Upper lobe of right lung (tissue), 1 donor: ENCODE measurements at regions of chr6 and their contacts with region 1.

Region 1: GRCh38 chr6:152642989-152643388 is 5.8 kb upstream of the SYNE1 start:
- DNase-seq: peak; percentile 79
- ATAC-seq: peak; percentile 98
- H3K4me3 ChIP-seq: no peak overlapping the region
- H3K27ac ChIP-seq: no peak overlapping the region
- H3K4me1 ChIP-seq: no peaks in the 10 kb centered on the region
- H3K27me3 ChIP-seq: no peaks in the 10 kb centered on the region
- CTCF ChIP-seq: peak; percentile 57

Region 2: GRCh38 chr6:152552616-152553209 is 90.3 kb before region 1 on chr6:
- intact Hi-C with region 1: loop called (anchors 5 kb)
- DNase-seq: peak; percentile 74
- ATAC-seq: peak; percentile 98
- H3K4me3 ChIP-seq: no peak overlapping the region
- H3K27ac ChIP-seq: no peak overlapping the region
- H3K4me1 ChIP-seq: no peaks in the 10 kb centered on the region
- H3K27me3 ChIP-seq: no peaks in the 10 kb centered on the region
- CTCF ChIP-seq: peak; percentile 91